Colonic mucosa (tissue), 4 donors: ENCODE measurements at regions of chr15 and their contacts with region 1.

Region 1: DNA sequence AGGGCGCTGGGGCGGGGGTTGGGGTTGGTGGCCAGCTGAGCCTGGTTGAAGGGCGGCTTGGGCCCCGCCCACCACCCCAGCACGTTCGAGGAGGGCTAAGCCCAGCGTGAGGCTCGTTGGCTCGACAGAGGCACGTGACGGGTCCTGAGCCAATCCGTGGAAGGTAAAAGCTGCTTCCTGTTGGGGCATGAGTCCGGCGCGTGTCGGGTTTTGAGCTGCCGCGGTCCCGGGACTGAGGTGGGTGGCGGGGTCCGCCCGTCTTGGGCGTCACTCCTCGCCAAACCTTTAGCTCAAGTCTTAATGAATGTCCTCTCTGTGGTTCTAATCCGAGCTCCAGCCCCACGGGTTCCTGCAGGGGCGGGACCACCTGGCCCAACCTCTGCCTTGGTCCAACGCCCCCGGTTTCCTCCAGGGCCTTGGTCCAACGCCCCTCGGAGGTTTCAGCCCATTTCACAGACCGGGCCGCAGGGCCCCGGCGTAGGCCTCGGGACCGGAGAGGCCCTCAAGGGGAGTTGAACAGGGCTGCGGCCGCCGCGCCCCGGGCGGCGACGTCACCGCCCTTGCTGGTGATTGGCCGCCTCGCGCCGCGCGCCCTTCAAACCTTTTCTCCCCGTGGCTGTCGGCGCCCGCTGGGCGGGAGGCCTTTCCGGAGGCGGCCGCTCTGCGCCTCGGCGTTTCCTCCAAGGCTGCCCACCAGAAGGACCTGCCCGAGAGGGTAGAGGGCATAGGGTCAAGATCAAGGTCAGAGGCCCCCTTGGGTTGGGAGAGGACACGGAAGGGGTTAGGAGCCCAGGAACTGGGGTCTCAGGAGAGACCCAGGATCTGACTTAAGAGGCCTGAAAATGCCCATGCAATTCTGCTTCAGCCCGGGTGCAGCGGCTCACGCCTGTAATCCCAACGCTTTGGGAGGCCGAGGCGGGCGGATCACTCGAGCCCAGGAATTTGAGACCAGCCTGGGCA is at the start of gene RCCD1:
- DNase-seq: peak; percentile 97
- H3K4me3 ChIP-seq: peak within 1 kb of the TSS; percentile 85
- H3K27ac ChIP-seq: peak within 1 kb of the TSS; percentile 96
- H3K4me1 ChIP-seq: peaks cover 21% of the 10 kb centered on the region
- H3K27me3 ChIP-seq: no peaks in the 10 kb centered on the region
- CTCF ChIP-seq: no peak
- total RNA-seq, gene RCCD1: 14.8 to 33.0 TPM

Region 2: GRCh38 chr15:91032919-91033803 is 78.2 kb after region 1 on chr15:
- intact Hi-C with region 1: loop called (anchors 5 kb)
- DNase-seq: peak; percentile 85
- H3K4me3 ChIP-seq: no peak overlapping the region
- H3K27ac ChIP-seq: no peak overlapping the region
- H3K4me1 ChIP-seq: no peaks in the 10 kb centered on the region
- H3K27me3 ChIP-seq: no peaks in the 10 kb centered on the region
- CTCF ChIP-seq: peak; percentile 85

Region 3: GRCh38 chr15:91271565-91272153 is 316.7 kb after region 1 on chr15:
- intact Hi-C with region 1: loop called (anchors 10 kb)
- DNase-seq: peak; percentile 58
- H3K4me3 ChIP-seq: no peak overlapping the region
- H3K27ac ChIP-seq: no peak overlapping the region
- H3K4me1 ChIP-seq: no peaks in the 10 kb centered on the region
- H3K27me3 ChIP-seq: no peaks in the 10 kb centered on the region
- CTCF ChIP-seq: peak; percentile 61